Ascending aorta (tissue), 2 donors: ENCODE measurements at regions of chr22 and their contacts with region 1.

Region 1: GRCh38 chr22:35627264-35628041 is 10.3 kb upstream of the MB start:
- DNase-seq: peak; percentile 41 to 88
- H3K4me3 ChIP-seq: peak overlapping the region; percentile 63 to 68
- H3K27ac ChIP-seq: peak overlapping the region; percentile 75 to 90
- H3K4me1 ChIP-seq: peaks cover 0 to 19% of the 10 kb centered on the region in 2 donors
- H3K27me3 ChIP-seq: no peaks in the 10 kb centered on the region
- CTCF ChIP-seq: peak; percentile 55 to 79 (median 64)

Region 2: GRCh38 chr22:35663371-35663770 is 35.9 kb after region 1 on chr22:
- intact Hi-C with region 1: loop called (anchors 2 kb)
- DNase-seq: no peak
- H3K4me3 ChIP-seq: peak overlapping the region; percentile 9 to 50
- H3K27ac ChIP-seq: peak overlapping the region in 1 of 2 donors; percentile 65
- H3K4me1 ChIP-seq: peaks cover 5 to 7% of the 10 kb centered on the region in 2 donors
- H3K27me3 ChIP-seq: no peaks in the 10 kb centered on the region
- CTCF ChIP-seq: no peak

Region 3: DNA sequence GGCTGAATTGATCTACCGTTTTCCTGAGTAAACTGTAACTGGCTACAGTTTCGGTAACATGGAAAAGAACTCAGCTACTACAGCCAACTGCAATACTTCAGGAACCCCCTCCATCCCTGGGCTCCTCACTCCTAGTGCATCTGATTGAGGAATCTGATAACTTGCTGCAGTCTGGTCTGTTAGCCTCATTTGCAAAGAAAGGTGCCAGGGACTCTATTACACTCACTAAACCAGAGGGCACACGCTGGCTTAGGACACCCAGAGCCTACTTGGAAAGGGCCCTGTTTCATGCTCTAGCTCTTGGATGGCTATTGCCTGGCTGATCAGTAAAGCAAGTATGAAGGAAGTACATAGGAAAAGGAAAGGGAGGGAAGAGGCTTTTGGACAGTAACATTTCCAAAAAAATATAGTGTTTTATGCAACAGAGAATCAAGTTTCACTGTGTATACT is 112.5 kb after region 1 on chr22:
- intact Hi-C with region 1: loop called (anchors 2 kb)
- DNase-seq: no peak
- H3K4me3 ChIP-seq: no peak overlapping the region
- H3K27ac ChIP-seq: peak overlapping the region in 1 of 2 donors; percentile 26
- H3K4me1 ChIP-seq: peaks cover 0 to 7% of the 10 kb centered on the region in 2 donors
- H3K27me3 ChIP-seq: no peaks in the 10 kb centered on the region
- CTCF ChIP-seq: no peak

Region 4: DNA sequence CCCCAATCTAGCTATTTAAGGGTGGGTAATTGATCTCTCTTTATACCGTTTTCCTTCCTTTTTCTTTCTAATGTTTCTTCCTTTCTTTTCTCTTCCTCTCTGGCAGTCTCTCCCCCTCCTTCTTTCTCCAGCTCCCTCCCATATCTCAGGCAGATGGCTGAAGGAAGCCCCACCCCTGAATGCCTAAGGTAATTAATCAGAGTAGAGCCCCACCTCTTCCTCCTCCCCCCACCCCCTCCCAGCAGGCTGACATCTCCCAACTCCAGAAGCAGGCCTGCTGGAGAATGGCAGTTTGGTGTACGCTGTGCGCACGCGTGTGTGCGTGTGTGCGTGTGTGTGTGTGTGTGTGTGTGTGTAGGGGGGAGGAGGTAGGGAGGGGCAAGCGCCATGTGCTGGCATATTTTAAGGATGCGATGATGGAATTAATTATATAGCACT is 212.9 kb after region 1 on chr22:
- intact Hi-C with region 1: loop called (anchors 2 kb)
- DNase-seq: peak; percentile 58 to 93
- H3K4me3 ChIP-seq: peak overlapping the region; percentile 58 to 60
- H3K27ac ChIP-seq: peak overlapping the region; percentile 72 to 79
- H3K4me1 ChIP-seq: peaks cover 4 to 30% of the 10 kb centered on the region in 2 donors
- H3K27me3 ChIP-seq: no peaks in the 10 kb centered on the region
- CTCF ChIP-seq: no peak

Region 5: DNA sequence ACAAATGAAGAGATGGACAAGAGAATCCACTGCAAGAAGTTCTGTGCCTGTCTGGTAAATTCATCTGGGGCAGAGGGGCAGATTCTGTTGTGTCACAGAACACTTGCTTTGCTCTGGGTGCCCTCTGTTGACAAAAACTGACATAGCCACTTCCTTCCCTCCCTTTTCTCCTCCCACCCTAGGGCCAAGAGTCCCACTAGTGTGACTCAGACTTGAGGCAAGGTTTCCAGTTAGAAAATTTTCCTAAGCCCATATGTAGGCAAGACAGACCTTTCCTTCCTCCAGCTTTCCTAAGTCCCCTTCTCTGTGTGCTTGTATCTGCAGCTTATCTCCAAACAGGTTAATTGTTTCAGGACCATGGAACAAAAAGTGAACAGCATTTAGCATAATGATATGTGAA is 294.3 kb after region 1 on chr22:
- intact Hi-C with region 1: loop called (anchors 1 kb)
- DNase-seq: peak; percentile 30 to 88
- H3K4me3 ChIP-seq: no peak overlapping the region
- H3K27ac ChIP-seq: peak overlapping the region; percentile 79 to 85
- H3K4me1 ChIP-seq: peaks cover 10 to 32% of the 10 kb centered on the region in 2 donors
- H3K27me3 ChIP-seq: no peaks in the 10 kb centered on the region
- CTCF ChIP-seq: peak; percentile 60 to 81 (median 66)

Region 6: DNA sequence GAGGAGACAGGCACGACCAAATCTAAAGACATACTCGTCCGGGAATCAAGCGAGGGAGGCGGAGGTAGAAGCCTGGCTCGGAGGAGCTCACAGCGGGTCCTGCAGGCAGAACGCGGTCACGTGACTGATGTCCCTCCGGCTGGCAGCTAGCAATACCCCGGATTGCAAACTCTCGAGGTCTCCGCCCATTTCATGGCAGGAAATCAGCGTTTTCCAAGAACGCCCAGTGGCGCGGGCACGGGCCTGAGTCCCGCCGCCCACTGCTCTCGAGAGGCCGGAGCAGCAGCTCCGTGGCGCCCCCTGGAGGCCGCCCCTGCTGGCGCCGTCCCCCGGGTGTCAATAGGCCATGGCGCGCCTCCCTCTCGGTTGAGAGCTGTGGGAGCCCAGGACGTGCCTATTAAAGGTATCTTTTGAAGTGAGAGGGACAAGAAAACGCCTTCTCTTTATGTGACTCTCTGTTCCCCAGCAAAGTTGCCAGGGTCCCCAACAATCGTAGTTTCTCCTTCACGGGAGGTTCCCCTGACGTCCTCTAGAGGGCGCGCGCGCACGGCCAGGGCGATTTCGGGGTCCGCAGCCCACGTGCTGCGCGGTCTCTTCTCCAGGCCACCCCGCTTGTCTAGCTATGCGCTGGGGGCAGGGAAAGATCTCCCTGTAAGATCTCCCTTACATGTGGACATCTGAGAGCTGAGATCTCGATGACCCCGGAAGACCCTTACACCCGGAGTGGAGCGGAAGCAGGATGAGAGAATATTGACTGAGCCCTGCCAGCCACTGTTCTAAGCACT is 438.5 kb after region 1 on chr22:
- intact Hi-C with region 1: loop called (anchors 5 kb)
- DNase-seq: peak; percentile 77 to 97
- H3K4me3 ChIP-seq: peak overlapping the region; percentile 61 to 64
- H3K27ac ChIP-seq: peak overlapping the region; percentile 83 to 87
- H3K4me1 ChIP-seq: peaks cover 0 to 3% of the 10 kb centered on the region in 2 donors
- H3K27me3 ChIP-seq: no peaks in the 10 kb centered on the region
- CTCF ChIP-seq: peak; percentile 99 to 100 (median 99)

Region 7: GRCh38 chr22:36221799-36222751 is 594.6 kb after region 1 on chr22:
- intact Hi-C with region 1: no loop called
- DNase-seq: no peak
- H3K4me3 ChIP-seq: no peak overlapping the region
- H3K27ac ChIP-seq: no peak overlapping the region
- H3K4me1 ChIP-seq: peaks cover 0 to 3% of the 10 kb centered on the region in 2 donors
- H3K27me3 ChIP-seq: no peaks in the 10 kb centered on the region
- CTCF ChIP-seq: peak; percentile 30 to 56 (median 47)